Right ventricle myocardium superior (tissue), 1 donor: ENCODE measurements at regions of chr1 and their contacts with region 1.

Region 1: DNA sequence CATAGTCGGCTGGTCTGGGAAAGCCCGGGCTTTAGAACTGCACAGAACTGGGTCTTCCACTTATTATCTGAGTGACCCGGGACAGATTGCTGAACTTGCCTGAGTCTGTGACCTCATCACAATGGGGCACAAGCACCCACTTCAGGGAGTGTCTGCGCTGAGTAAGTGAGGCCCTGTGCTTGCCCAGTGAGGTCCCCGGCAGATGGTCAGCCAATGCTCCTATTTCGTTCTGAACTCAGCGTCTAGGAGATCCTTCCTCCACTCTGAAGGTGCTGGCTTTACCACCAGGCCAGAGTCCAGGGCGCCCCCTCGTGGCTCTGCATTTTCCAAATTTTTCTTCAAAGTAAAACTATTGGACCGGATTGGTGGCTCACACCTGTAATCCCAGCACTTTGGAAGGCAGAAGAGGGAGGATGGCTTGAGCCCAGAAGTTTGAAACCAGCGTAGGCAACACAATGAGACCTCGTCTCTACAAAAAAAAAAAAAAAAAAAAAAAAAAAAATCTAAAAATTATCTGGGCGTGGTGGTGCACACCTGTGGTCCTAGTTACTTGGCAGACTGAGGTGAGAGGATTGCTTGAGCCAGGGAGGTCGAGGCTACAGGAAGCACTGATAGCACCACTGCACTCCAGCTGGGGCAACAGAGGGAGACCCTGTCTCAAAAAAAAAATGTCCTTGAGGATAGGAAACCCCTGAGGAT is 61.7 kb downstream of the FCRL5 start:
- DNase-seq: peak; percentile 65
- ATAC-seq: peak; percentile 75

Region 2: GRCh38 chr1:157193702-157194391 is 296.8 kb before region 1 on chr1:
- intact Hi-C with region 1: loop called (anchors 5 kb)
- DNase-seq: peak; percentile 69
- ATAC-seq: peak; percentile 27

Region 3: DNA sequence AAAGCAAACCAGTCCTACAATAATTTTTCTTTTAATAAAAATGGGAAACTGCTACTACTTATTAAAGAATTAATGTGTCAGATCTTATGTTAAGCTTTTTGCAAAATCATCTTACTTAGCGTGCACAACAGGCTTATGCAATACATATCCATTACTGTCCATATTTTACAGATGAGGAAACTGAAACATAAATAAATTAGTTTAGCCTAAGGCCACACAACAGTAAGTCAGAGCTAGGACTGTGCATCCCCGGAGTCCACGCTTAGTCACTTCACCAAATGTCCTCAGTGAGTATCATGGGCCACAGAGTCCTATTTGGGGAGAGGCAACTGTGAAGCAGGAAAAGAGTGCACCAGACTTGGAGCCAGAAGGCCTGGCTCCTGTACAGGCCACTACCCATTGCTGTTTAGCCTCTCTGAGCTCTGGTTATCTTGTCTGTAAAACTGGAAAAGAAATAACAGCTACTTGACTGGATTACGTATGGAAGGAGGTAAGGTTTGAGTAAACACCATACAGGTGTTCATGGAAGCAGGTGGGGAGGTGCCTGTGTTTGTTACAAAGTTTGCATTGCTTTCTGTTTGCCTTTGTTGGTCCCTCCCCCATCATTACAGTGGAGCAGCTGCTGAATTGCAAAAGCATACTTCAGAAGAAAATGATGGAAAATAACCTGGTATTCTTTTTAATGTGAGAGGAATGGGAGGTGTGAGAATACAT is 131.2 kb before region 1 on chr1:
- intact Hi-C with region 1: no loop called
- DNase-seq: no peak
- ATAC-seq: no peak

Region 4: DNA sequence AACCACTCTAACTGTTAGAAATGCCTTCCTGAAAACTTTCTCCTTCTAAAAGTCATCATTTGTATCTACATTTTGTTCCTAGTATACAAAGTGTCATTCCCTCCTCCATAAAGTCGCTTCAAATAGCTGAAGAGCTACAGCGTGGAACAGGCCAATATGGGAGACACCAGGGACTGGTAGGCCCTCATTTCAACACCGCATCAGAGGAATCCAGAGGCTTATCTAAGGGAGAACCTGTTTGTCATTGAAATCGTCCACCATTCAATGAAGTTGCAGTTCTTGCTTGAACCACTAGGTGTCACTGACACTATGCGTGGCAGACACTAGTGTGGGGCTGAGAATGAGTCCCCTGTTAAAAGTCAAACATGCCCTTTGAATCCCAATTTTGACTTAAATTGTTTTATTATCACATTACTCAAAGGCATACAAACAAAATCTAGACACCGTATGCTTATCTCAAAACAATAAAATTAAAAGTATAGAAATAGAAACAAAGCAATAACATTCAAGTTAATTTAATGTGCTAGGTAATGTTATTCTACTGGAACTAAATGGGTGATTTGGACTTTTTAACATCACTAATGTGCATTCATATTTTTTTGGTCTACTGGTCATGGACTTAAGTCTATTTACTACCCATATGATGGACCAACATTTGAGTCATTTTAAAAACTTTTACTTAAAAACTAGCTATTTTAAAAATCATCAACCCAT is 120.7 kb before region 1 on chr1:
- intact Hi-C with region 1: loop called (anchors 10 kb)
- DNase-seq: no peak
- ATAC-seq: peak; percentile 73

Region 5: GRCh38 chr1:157618190-157618589 is 127.6 kb after region 1 on chr1:
- intact Hi-C with region 1: no loop called
- DNase-seq: no peak
- ATAC-seq: no peak